ENCODE measurements at regions of chr16 and their contacts with region 1.

Region 1: GRCh38 chr16:47492428-47493377 is 31.6 kb downstream of the PHKB start:
- DNase-seq: peak; percentile 92
- ATAC-seq: peak; percentile 100
- H3K4me3 ChIP-seq: peak overlapping the region in 2 of 3 experiments; percentile 13 to 32; a peak in 2 of 6 replicates
- H3K27ac ChIP-seq: peak overlapping the region; percentile 65
- H3K4me1 ChIP-seq: peaks cover 51% of the 10 kb centered on the region
- H3K27me3 ChIP-seq: no peaks in the 10 kb centered on the region
- CTCF ChIP-seq: peak; percentile 33
- EP300 ChIP-seq: no peak
- POLR2A ChIP-seq: peak; percentile 26 to 59; a peak in 3 of 4 replicates
- RAD21 ChIP-seq: peak; percentile 30; the same call in 1 of the 2 replicates

Region 2: DNA sequence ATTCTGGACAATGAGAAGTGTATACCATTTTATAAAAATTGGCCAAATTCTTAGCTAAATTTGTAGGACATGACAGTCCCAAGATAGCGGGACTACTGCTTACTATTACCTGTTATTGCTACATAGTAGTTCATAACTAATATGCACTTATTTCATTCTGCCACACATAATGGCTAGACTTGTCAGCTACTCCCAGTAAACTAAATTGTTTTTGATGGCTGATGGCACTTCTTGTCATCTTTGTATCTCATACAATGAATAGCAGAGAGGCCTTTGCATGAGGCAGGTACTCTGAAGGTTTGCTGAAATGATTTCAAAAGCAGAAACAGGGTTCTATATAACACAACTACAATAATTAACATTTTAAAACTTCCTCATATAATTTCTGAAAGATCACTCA is 75.8 kb before region 1 on chr16:
- CTCF ChIA-PET with region 1: no interaction called
- POLR2A ChIA-PET with region 1: no interaction called
- in situ Hi-C with region 1: no loop called
- intact Hi-C with region 1: no loop called
- DNase-seq: no peak
- ATAC-seq: no peak
- H3K4me3 ChIP-seq: no peak overlapping the region
- H3K27ac ChIP-seq: no peak overlapping the region
- H3K4me1 ChIP-seq: no peaks in the 10 kb centered on the region
- H3K27me3 ChIP-seq: no peaks in the 10 kb centered on the region
- CTCF ChIP-seq: no peak
- EP300 ChIP-seq: no peak
- POLR2A ChIP-seq: no peak
- RAD21 ChIP-seq: no peak

Region 3: DNA sequence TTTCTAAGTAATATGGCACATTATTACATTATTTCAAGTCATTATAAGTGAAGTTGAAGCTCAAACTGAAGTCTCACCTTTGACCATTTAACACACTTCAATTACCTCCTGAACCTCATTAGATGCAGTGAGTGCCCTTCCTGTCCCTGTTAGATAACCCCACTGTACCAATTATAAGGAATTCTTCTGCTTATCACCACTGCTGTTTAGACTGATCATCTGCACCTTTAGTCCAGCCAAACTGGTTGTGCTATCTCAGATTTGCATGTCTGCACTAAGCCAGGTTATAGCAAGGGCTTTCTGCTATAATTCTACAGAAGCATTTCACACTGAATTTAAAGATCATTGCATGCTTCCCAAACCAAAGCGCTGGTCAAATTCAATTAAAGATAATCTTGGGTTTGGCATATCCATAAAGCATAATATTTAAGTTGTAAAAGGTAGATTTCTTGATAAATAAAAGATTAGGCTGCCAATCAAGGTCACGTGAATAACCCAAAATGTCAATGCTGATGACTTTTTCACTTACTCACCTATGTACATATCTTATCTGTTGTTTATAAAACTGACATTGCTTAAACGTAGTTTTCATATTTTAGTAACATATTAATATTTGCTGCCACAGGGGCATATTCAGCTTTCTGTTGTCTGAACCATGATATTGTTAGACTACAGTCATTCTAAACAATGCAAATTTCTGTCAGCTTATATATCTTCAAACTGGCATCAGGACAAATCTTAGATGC is 43.7 kb before region 1 on chr16:
- CTCF ChIA-PET with region 1: no interaction called
- POLR2A ChIA-PET with region 1: no interaction called
- in situ Hi-C with region 1: no loop called
- intact Hi-C with region 1: no loop called
- DNase-seq: no peak
- ATAC-seq: no peak
- H3K4me3 ChIP-seq: no peak overlapping the region
- H3K27ac ChIP-seq: no peak overlapping the region
- H3K4me1 ChIP-seq: peaks cover 19% of the 10 kb centered on the region
- H3K27me3 ChIP-seq: no peaks in the 10 kb centered on the region
- CTCF ChIP-seq: no peak
- EP300 ChIP-seq: no peak
- POLR2A ChIP-seq: no peak
- RAD21 ChIP-seq: no peak

Region 4: GRCh38 chr16:47475786-47476185 is 16.9 kb before region 1 on chr16:
- CTCF ChIA-PET with region 1: no interaction called
- POLR2A ChIA-PET with region 1: interaction called, 8 read pairs
- in situ Hi-C with region 1: no loop called
- intact Hi-C with region 1: loop called (anchors 1 kb)
- DNase-seq: peak; percentile 93
- ATAC-seq: peak; percentile 86
- H3K4me3 ChIP-seq: no peak overlapping the region
- H3K27ac ChIP-seq: peak overlapping the region; percentile 74
- H3K4me1 ChIP-seq: peaks cover 62% of the 10 kb centered on the region
- H3K27me3 ChIP-seq: no peaks in the 10 kb centered on the region
- CTCF ChIP-seq: no peak
- EP300 ChIP-seq: peak in 1 of 2 experiments; percentile 86; a peak in 3 of 4 replicates
- POLR2A ChIP-seq: no peak
- RAD21 ChIP-seq: no peak

Region 5: DNA sequence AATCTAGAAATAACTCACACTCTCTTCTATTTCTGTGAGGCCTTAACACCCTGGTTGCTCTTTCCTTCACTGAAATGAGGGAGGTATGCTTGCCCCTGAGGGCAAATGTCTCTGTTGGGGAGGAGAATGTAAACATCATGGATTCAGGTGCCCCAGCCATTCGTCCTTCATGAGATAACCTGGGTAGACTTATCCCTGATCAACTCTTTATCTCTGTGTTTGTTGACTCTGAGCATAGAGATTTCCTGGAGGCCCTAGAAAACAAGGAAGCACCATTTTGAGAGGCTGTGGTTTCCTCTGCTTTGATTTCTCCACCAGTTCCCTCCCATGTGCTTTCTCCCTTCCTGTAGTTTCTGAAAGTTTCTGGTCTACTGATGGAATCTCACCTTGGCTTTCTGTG is 45.8 kb after region 1 on chr16:
- CTCF ChIA-PET with region 1: no interaction called
- POLR2A ChIA-PET with region 1: no interaction called
- in situ Hi-C with region 1: no loop called
- intact Hi-C with region 1: loop called (anchors 5 kb)
- DNase-seq: peak; percentile 92
- ATAC-seq: peak; percentile 98
- H3K4me3 ChIP-seq: no peak overlapping the region
- H3K27ac ChIP-seq: peak overlapping the region; percentile 36
- H3K4me1 ChIP-seq: peaks cover 33% of the 10 kb centered on the region
- H3K27me3 ChIP-seq: no peaks in the 10 kb centered on the region
- CTCF ChIP-seq: no peak
- EP300 ChIP-seq: peak in 1 of 2 experiments; percentile 95; a peak in 2 of 4 replicates
- POLR2A ChIP-seq: no peak
- RAD21 ChIP-seq: no peak

Region 6: DNA sequence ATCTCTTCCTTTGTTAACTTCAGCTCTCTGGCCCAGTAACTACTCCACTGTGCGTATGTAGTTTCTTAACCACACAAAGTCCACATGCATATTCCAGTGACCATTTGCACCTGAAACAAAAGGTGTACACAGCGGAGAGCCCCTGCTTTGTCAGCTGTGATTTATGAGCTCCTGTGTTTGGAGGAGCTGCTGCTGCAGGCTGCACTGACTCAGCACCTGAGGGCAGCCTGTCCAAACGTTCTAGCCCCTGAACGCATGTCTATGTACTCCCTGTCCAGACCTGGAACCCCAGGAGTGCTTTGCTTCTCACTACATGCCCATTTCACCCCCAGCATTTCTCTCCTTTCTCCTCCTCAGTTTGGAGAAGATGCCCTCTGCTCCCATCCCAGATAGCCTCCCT is 447.0 kb after region 1 on chr16:
- CTCF ChIA-PET with region 1: no interaction called
- POLR2A ChIA-PET with region 1: no interaction called
- in situ Hi-C with region 1: no loop called
- intact Hi-C with region 1: no loop called
- DNase-seq: no peak
- ATAC-seq: no peak
- H3K4me3 ChIP-seq: no peak overlapping the region
- H3K27ac ChIP-seq: no peak overlapping the region
- H3K4me1 ChIP-seq: no peaks in the 10 kb centered on the region
- H3K27me3 ChIP-seq: peaks cover 0 to 15% of the 10 kb centered on the region in 2 experiments; a peak in 4 of 5 replicates
- CTCF ChIP-seq: 0 out of 2 replicates have a peak, but pooled peaks have one; percentile 12
- EP300 ChIP-seq: no peak
- POLR2A ChIP-seq: no peak
- RAD21 ChIP-seq: no peak

Measured in HepG2 (cell line).